Activated CD4-positive, alpha-beta T cell treated with anti-CD3 and anti-CD28 coated beads, Interleukin-2, amount 10 ng/mL, durations not matched to agents 7 days and 5 days (primary cell): ENCODE measurements at regions of chr2 and their contacts with region 1.

Region 1: GRCh38 chr2:190575263-190575662 is 40.7 kb upstream of the NEMP2 start:
- DNase-seq: no peak
- H3K4me3 Mint-ChIP-seq: no peak overlapping the region
- H3K27ac Mint-ChIP-seq: peak overlapping the region; percentile 21
- H3K4me1 Mint-ChIP-seq: peaks cover 34% of the 10 kb centered on the region
- H3K27me3 Mint-ChIP-seq: no peaks in the 10 kb centered on the region

Region 2: GRCh38 chr2:190355980-190356644 is 219.2 kb before region 1 on chr2:
- CTCF ChIA-PET with region 1: no interaction called
- POLR2A ChIA-PET with region 1: interaction called, 12 read pairs
- DNase-seq: no peak
- H3K4me3 Mint-ChIP-seq: no peak overlapping the region
- H3K27ac Mint-ChIP-seq: no peak overlapping the region
- H3K4me1 Mint-ChIP-seq: peaks cover 18% of the 10 kb centered on the region
- H3K27me3 Mint-ChIP-seq: no peaks in the 10 kb centered on the region